PC-9 (cell line): ENCODE measurements at regions of chr7 and their contacts with region 1.

Region 1: GRCh38 chr7:140121326-140121725 is 55.5 kb downstream of the KDM7A start:
- DNase-seq: no peak
- H3K4me3 ChIP-seq: no peak overlapping the region
- H3K27ac ChIP-seq: no peak overlapping the region
- H3K4me1 ChIP-seq: no peaks in the 10 kb centered on the region
- H3K27me3 ChIP-seq: no peaks in the 10 kb centered on the region
- CTCF ChIP-seq: no peak

Region 2: GRCh38 chr7:140141256-140141655 is 19.9 kb after region 1 on chr7:
- CTCF ChIA-PET with region 1: interaction called, 11 read pairs
- POLR2A ChIA-PET with region 1: interaction called, 3 read pairs
- intact Hi-C with region 1: no loop called
- DNase-seq: no peak
- H3K4me3 ChIP-seq: no peak overlapping the region
- H3K27ac ChIP-seq: no peak overlapping the region
- H3K4me1 ChIP-seq: no peaks in the 10 kb centered on the region
- H3K27me3 ChIP-seq: no peaks in the 10 kb centered on the region
- CTCF ChIP-seq: no peak